ENCODE measurements at regions of chr16 and their contacts with region 1.

Region 1: GRCh38 chr16:74813109-74813641 is 38.6 kb upstream of the FA2H start:
- DNase-seq: peak; percentile 93
- H3K4me3 ChIP-seq: peak overlapping the region in 1 of 2 experiments; percentile 20; a peak in 1 of 4 replicates
- H3K27ac ChIP-seq: no peak overlapping the region
- H3K4me1 ChIP-seq: no peaks in the 10 kb centered on the region
- H3K27me3 ChIP-seq: no peaks in the 10 kb centered on the region; the same call in 1 of the 2 replicates
- CTCF ChIP-seq: peak; percentile 81
- EP300 ChIP-seq: no peak
- RAD21 ChIP-seq: peak; percentile 82

Region 2: GRCh38 chr16:74521691-74522090 is 291.5 kb before region 1 on chr16:
- CTCF ChIA-PET with region 1: no interaction called
- POLR2A ChIA-PET with region 1: no interaction called
- DNase-seq: peak; percentile 12
- H3K4me3 ChIP-seq: no peak overlapping the region
- H3K27ac ChIP-seq: peak overlapping the region in 1 of 2 experiments; percentile 39; a peak in 2 of 4 replicates
- H3K4me1 ChIP-seq: peaks cover 4 to 16% of the 10 kb centered on the region in 2 experiments; a peak in 2 of 4 replicates
- H3K27me3 ChIP-seq: no peaks in the 10 kb centered on the region
- CTCF ChIP-seq: no peak
- EP300 ChIP-seq: no peak
- RAD21 ChIP-seq: no peak

Region 3: GRCh38 chr16:74709441-74709877 is 103.7 kb before region 1 on chr16:
- CTCF ChIA-PET with region 1: interaction called, 55 read pairs
- POLR2A ChIA-PET with region 1: no interaction called
- DNase-seq: peak; percentile 86
- H3K4me3 ChIP-seq: no peak overlapping the region
- H3K27ac ChIP-seq: no peak overlapping the region
- H3K4me1 ChIP-seq: no peaks in the 10 kb centered on the region
- H3K27me3 ChIP-seq: no peaks in the 10 kb centered on the region
- CTCF ChIP-seq: peak; percentile 97
- EP300 ChIP-seq: no peak
- RAD21 ChIP-seq: peak; percentile 94

Region 4: GRCh38 chr16:74774203-74775116 is 38.7 kb before region 1 on chr16 and contains the start of gene FA2H:
- CTCF ChIA-PET with region 1: interaction called, 30 read pairs
- POLR2A ChIA-PET with region 1: no interaction called
- DNase-seq: peak; percentile 97
- H3K4me3 ChIP-seq: peak within 1 kb of the TSS; percentile 43 to 46
- H3K27ac ChIP-seq: no peak within 1 kb of the TSS
- H3K4me1 ChIP-seq: peaks cover 0 to 8% of the 10 kb centered on the region in 2 experiments; a peak in 1 of 4 replicates
- H3K27me3 ChIP-seq: peaks cover 23% of the 10 kb centered on the region
- CTCF ChIP-seq: peak; percentile 40
- EP300 ChIP-seq: no peak
- RAD21 ChIP-seq: no peak
- polyA plus RNA-seq, gene FA2H: not detected in 2 replicates

Region 5: GRCh38 chr16:74825941-74826542 is 12.9 kb after region 1 on chr16:
- CTCF ChIA-PET with region 1: interaction called, 78 read pairs
- POLR2A ChIA-PET with region 1: no interaction called
- DNase-seq: no peak
- H3K4me3 ChIP-seq: no peak overlapping the region
- H3K27ac ChIP-seq: no peak overlapping the region
- H3K4me1 ChIP-seq: no peaks in the 10 kb centered on the region; a peak in 1 of 4 replicates
- H3K27me3 ChIP-seq: peaks cover 5% of the 10 kb centered on the region; the same call in 1 of the 2 replicates
- CTCF ChIP-seq: no peak
- EP300 ChIP-seq: no peak
- RAD21 ChIP-seq: no peak

Region 6: GRCh38 chr16:74922150-74923138 is 109.3 kb after region 1 on chr16:
- CTCF ChIA-PET with region 1: no interaction called
- POLR2A ChIA-PET with region 1: no interaction called
- DNase-seq: no peak
- H3K4me3 ChIP-seq: no peak overlapping the region
- H3K27ac ChIP-seq: no peak overlapping the region
- H3K4me1 ChIP-seq: no peaks in the 10 kb centered on the region
- H3K27me3 ChIP-seq: no peaks in the 10 kb centered on the region
- CTCF ChIP-seq: no peak
- EP300 ChIP-seq: no peak
- RAD21 ChIP-seq: no peak

Measured in SK-N-SH (cell line).